Stomach (tissue), 19 donors: ENCODE measurements at regions of chr7 and their contacts with region 1.

Region 1: DNA sequence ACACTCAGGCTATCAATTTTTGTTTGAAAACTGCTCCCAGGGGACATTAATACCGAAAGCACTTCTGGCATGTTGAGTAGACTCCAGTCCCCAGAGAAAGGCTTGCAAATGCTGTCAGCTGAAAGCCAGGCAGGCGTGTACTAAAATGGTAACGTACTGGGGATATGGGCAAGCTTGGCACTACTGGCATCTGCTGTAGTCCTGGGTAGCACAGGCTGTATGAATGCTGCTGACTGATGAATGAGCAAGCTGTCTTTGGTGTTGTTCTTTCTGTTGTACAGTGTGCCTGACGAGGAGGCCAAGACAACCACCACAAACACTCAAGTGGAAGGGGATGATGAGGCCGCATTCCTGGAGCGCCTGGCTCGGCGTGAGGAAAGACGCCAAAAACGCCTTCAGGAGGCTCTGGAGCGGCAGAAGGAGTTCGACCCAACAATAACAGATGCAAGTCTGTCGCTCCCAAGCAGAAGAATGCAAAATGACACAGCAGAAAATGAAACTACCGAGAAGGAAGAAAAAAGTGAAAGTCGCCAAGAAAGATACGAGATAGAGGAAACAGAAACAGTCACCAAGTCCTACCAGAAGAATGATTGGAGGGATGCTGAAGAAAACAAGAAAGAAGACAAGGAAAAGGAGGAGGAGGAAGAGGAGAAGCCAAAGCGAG is 53.5 kb upstream of the AGBL3 start:
- DNase-seq: no peak
- H3K4me3 ChIP-seq: no peak overlapping the region
- H3K27ac ChIP-seq: peak overlapping the region in 4 of 5 donors; percentile 61 to 76 (median 68)
- H3K4me1 ChIP-seq: peaks cover 0 to 58% (median 33%) of the 10 kb centered on the region in 4 donors
- H3K27me3 ChIP-seq: no peaks in the 10 kb centered on the region
- CTCF ChIP-seq: no peak
- EP300 ChIP-seq: no peak
- POLR2A ChIP-seq: no peak

Region 2: DNA sequence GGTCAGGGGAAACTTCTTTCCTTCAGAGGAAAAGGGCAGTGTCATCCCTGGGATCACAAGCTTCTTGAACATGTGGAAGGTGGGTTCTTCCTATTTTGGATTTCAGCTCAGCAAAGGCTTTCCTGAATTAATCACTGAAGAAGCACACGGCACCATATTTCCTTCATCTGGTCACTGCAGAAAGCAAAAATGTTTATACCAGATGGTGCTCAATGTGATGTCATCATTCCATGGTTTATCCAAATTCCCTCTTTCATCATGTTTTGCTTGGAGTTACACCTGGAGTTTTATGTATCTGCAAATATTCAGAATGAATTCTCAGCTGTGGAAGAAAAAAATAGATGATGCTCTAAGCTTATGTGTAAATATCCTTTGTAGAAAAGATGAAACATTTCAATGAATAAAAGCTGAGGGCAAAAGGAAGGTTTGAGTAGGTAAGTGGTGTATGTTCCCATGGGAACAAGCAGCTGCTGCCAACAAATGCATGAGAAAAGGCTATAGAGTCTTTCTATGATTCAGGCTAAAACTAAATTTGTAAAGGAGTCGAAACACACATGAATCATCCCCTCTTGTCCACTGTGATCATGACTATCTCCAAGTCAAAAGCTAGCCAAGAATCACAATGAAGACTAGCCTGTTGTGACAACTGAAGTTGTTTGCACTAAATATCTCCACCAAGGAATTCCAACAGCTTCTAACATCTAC is 313.1 kb before region 1 on chr7:
- intact Hi-C with region 1: loop called (anchors 10 kb)
- DNase-seq: no peak
- H3K4me3 ChIP-seq: no peak overlapping the region
- H3K27ac ChIP-seq: no peak overlapping the region
- H3K4me1 ChIP-seq: no peaks in the 10 kb centered on the region
- H3K27me3 ChIP-seq: no peaks in the 10 kb centered on the region
- CTCF ChIP-seq: no peak
- EP300 ChIP-seq: no peak
- POLR2A ChIP-seq: no peak

Region 3: GRCh38 chr7:134834689-134835462 is 98.0 kb before region 1 on chr7:
- intact Hi-C with region 1: no loop called
- DNase-seq: no peak
- H3K4me3 ChIP-seq: no peak overlapping the region
- H3K27ac ChIP-seq: peak overlapping the region in 4 of 5 donors; percentile 66 to 89 (median 72)
- H3K4me1 ChIP-seq: peaks cover 0 to 65% (median 20%) of the 10 kb centered on the region in 4 donors
- H3K27me3 ChIP-seq: no peaks in the 10 kb centered on the region
- CTCF ChIP-seq: no peak
- EP300 ChIP-seq: no peak
- POLR2A ChIP-seq: no peak